ENCODE measurements at regions of chr14 and their contacts with region 1.

Region 1: DNA sequence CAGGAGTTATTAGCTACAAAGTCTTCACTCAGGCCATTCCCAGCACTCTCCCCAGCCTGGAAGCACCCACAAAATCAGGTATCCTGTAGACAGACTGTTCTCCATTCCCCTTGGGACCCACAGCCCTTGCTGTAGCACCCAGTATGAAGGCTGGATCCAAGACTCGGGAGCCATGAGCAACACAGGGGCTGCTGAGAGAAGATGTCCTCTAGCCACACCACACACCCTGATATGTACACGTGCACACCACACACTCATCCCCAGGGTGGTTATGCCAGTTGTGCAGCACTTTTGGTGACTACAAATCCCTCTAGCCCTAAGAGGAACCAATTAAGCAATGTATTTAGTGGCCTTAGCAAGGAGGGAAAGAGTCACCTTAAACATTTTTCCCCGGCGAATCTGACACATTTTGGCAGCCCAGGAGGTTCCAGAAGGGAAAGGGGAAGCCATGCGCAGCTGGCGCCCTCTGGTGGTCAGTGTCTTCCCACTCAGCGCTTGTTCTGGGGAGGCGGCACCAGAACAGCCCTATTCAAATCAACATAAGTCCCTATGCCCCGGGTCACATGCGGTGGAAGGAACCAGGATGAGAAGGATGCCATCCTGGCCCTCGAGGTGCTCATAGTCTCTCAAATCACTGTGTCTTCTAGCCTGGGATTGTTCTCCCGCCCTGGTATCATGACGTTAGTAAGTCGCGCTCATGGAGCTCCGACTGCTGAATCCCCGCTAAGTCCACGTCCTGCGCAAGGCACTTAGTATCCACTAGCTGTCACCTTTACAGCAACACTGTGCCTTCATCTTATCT is 96.9 kb downstream of the GCH1 start:
- DNase-seq: peak; percentile 82
- CTCF ChIP-seq: peak; percentile 91

Region 2: DNA sequence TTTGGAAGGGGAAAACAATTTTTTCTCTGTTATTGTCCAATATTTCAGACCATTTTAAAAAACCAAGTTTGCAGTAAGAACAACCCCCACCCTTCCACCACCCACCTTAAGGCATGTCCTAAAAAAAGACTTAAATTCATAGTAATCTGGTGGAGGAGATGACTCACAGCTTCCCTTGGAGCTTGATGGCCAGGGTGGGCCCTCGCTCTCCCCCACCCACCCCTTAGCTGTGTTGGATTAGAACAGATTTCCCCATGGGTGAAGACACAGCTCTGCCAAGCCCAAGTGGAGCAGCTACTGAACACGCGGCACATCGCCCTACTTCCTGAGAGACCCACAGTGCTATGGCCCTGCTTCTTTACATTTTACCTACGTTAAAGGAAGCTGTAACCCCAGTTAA is 43.4 kb before region 1 on chr14:
- CTCF ChIA-PET with region 1: no interaction called
- POLR2A ChIA-PET with region 1: no interaction called
- DNase-seq: no peak
- CTCF ChIP-seq: no peak

Region 3: GRCh38 chr14:54782751-54783679 is 22.7 kb before region 1 on chr14:
- CTCF ChIA-PET with region 1: interaction called, 77 read pairs
- POLR2A ChIA-PET with region 1: no interaction called
- DNase-seq: peak; percentile 78
- CTCF ChIP-seq: peak; percentile 53

Region 4: DNA sequence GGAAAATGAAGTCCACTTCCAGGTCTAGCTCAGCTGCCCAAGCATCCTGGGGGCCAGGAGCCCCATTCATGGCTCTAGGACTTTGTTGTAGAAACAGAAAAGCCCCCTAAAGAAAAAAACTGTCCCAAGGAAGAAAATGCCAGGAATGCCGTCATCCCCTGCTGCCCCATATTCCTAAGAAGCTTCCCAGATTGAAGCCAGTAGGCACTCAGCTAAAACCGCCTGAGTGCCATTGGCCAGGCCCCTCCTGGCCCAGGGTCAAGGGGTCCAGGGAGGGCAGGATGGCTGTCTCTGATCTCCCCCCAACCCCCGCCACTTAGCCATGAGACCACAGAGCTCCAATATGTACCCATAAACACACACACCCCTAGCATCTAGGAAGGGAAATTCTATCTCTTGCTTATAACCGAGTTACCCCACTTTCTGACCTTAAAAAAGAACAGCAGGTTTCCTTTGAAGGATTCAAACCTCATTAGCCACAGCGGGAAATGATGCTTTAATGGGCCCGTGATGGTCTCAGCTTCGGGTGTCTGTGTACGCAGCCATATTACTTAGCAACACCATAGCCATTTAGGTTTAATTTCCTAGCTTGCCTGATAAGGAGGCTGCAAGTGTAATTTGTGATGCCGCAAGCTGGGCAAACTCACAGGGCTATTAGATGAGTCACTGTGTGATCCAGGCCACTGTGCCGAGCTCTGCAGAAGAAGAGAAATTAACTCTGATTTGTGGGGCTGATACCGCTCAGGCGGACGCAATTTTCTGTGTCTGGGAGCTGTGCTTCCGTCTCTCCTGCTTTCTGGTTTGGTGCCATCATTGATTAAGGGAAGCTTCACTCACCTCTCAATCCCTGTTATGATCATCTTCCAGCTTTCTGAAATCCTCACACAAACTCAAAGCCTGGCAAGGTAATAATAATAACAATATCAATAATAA is 12.7 kb after region 1 on chr14:
- CTCF ChIA-PET with region 1: interaction called, 48 read pairs
- POLR2A ChIA-PET with region 1: no interaction called
- DNase-seq: no peak
- CTCF ChIP-seq: no peak

Region 5: DNA sequence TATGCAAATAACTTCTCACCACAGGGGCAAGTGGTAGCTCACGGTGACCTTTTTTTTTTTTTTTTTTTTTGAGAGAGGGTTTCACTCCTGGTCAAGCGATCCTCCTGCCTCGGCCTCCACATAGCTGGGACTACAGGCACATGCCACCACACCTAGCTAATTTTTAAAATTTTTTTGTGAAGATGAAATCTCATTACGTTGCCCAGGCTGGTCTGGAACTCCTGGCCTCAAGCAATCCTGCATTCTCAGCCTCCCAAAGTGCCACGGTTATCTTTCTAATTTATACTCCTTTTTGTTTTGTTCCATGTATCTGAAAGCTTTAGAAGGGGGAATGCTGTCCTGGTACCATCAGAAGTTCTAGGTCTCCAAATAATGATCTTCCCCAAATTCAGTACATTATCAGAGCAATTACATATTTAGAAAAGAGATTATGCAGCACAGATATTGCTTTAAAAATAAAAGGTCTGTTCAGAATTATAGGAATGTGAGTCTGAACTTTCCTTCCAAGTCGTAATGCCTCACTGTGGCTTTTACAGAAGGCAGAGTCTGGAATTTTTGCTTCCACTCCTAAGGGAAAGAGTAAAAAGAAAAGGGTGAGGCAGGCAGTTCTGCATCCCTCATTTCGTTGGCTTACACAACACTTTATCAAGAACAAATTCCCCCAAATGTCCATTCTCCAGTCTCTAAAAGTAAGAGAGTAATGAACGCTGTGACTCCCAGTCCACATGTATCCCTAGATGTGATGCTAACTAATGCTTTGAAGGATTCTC is 23.9 kb after region 1 on chr14:
- CTCF ChIA-PET with region 1: interaction called, 10 read pairs
- POLR2A ChIA-PET with region 1: no interaction called
- DNase-seq: no peak
- CTCF ChIP-seq: no peak